WTC11 (cell line): ENCODE measurements at regions of chr7 and their contacts with region 1.

Region 1: DNA sequence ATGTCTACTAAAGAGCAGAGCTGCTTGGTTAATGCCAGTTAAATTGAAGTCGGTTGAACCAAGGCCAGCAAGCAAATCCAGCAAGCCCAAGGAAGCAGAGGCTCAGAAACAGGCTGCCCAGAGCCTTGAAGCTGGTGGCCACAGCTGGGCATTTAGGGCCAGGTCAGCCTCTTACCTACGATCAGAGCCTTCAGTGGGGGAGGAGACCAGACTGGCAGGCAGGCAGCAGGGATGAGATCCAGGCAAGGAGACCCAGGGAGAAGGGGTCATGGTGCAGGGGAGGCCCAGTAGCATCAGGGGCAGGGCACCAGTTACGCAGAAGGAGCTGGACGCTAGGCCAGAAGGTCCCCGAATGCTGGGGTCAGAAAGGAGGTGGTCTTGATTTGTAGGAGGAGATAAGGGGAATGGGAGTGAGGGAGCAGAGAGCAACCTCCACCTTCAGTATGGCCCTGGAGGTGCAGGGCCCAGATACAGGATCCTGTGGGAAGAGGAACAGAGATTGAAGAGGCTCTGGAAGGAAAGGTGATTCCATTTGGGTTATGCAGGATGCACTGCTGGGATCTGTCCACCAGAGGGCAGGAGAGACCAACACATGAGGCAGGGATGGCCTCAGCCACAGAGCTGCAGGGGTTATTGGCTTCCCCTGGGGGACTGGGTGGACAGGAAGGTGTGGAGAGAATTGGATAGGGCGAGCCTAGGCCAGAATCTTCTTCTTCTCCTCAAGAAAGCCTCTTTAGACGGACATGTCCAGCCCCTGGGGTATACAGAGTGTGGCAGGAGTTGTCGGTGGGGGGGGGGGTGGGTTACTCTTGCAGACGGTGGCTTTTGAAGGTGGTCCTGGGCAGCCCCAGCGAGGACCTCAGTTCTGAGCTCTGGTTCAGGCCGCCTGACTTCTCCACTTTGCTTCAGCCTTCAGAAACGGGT is 132.6 kb upstream of the PODXL start:
- DNase-seq: peak; percentile 91
- ATAC-seq: peak; percentile 80
- H3K4me3 Mint-ChIP-seq: no peak overlapping the region
- H3K27ac Mint-ChIP-seq: no peak overlapping the region
- H3K4me1 Mint-ChIP-seq: peaks cover 13% of the 10 kb centered on the region
- H3K27me3 Mint-ChIP-seq: peaks cover 6% of the 10 kb centered on the region
- CTCF ChIP-seq: peak; percentile 98

Region 2: GRCh38 chr7:131723926-131724325 is 34.9 kb after region 1 on chr7:
- CTCF ChIA-PET with region 1: interaction called, 12 read pairs
- POLR2A ChIA-PET with region 1: no interaction called
- DNase-seq: no peak
- ATAC-seq: no peak
- H3K4me3 Mint-ChIP-seq: no peak overlapping the region
- H3K27ac Mint-ChIP-seq: no peak overlapping the region
- H3K4me1 Mint-ChIP-seq: no peaks in the 10 kb centered on the region
- H3K27me3 Mint-ChIP-seq: peaks cover 8% of the 10 kb centered on the region; the same call in 1 of the 2 replicates
- CTCF ChIP-seq: no peak

Region 3: DNA sequence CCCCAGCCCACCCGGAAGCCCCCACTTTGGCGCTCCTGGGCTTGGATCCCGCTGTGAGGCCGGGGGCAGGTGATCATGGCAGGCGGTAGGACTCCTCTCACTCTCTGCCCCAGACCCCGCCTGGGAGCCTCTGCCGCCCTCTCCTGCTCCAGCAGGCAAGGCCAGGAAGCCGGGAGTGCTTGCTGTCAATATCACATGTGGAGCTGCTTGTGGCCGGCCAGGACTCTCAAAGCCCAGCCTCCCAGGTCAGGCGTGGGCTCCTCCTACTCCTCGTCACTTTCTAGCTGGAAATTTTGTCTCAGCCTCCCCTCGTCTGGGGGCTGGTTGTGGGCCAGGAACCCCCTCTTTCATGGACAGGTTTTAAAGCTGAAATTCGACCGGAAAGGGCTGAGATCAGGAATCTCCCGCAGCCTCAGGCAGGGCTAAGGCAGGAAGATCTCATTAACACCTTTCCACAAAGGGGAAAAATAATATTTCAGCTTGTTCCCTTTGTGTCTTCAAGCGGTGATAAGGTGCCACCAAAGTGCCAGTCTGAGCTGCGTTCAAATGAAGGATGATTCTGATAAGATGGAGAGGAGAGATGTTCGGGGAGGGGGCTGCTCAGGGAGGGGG is 141.1 kb after region 1 on chr7:
- CTCF ChIA-PET with region 1: interaction called, 18 read pairs
- POLR2A ChIA-PET with region 1: no interaction called
- DNase-seq: peak; percentile 76
- ATAC-seq: peak; percentile 98
- H3K4me3 Mint-ChIP-seq: peak overlapping the region; percentile 33
- H3K27ac Mint-ChIP-seq: no peak overlapping the region
- H3K4me1 Mint-ChIP-seq: peaks cover 21% of the 10 kb centered on the region
- H3K27me3 Mint-ChIP-seq: peaks cover 19% of the 10 kb centered on the region
- CTCF ChIP-seq: no peak

Region 4: GRCh38 chr7:131843898-131844331 is 154.9 kb after region 1 on chr7:
- CTCF ChIA-PET with region 1: interaction called, 13 read pairs
- POLR2A ChIA-PET with region 1: no interaction called
- DNase-seq: no peak
- ATAC-seq: no peak
- H3K4me3 Mint-ChIP-seq: no peak overlapping the region
- H3K27ac Mint-ChIP-seq: no peak overlapping the region
- H3K4me1 Mint-ChIP-seq: peaks cover 5% of the 10 kb centered on the region; the same call in 1 of the 2 replicates
- H3K27me3 Mint-ChIP-seq: peaks cover 3% of the 10 kb centered on the region; the same call in 1 of the 2 replicates
- CTCF ChIP-seq: no peak

Region 5: DNA sequence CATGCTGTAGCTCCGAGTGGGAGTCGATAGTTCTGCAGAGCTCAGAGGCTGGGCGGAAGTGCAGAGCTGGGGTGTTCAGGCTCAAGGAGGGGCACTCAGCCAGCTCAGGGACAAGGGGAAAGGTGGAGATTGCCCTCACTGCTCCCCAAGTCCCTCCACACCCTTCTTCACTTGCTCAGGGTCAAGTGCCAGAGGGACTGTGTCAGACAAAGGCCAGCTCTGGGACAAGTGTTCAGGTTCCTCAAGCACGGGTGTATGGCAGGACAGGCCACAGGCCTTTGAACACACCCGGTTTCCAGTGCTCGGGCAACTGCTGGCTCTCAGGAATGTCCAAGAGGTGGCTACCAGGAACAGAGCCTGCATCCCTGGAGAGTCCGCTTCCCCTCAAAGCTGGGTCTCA is 160.5 kb after region 1 on chr7:
- CTCF ChIA-PET with region 1: interaction called, 13 read pairs
- POLR2A ChIA-PET with region 1: no interaction called
- DNase-seq: no peak
- ATAC-seq: no peak
- H3K4me3 Mint-ChIP-seq: no peak overlapping the region
- H3K27ac Mint-ChIP-seq: no peak overlapping the region
- H3K4me1 Mint-ChIP-seq: no peaks in the 10 kb centered on the region
- H3K27me3 Mint-ChIP-seq: peaks cover 2% of the 10 kb centered on the region; the same call in 1 of the 2 replicates
- CTCF ChIP-seq: no peak

Region 6: GRCh38 chr7:131945313-131945911 is 256.4 kb after region 1 on chr7:
- CTCF ChIA-PET with region 1: interaction called, 32 read pairs
- POLR2A ChIA-PET with region 1: interaction called, 3 read pairs
- DNase-seq: peak; percentile 86
- ATAC-seq: peak; percentile 93
- H3K4me3 Mint-ChIP-seq: no peak overlapping the region; the same call in 1 of the 2 replicates
- H3K27ac Mint-ChIP-seq: no peak overlapping the region
- H3K4me1 Mint-ChIP-seq: peaks cover 6% of the 10 kb centered on the region; the same call in 1 of the 2 replicates
- H3K27me3 Mint-ChIP-seq: peaks cover 32% of the 10 kb centered on the region
- CTCF ChIP-seq: peak; percentile 76

Region 7: DNA sequence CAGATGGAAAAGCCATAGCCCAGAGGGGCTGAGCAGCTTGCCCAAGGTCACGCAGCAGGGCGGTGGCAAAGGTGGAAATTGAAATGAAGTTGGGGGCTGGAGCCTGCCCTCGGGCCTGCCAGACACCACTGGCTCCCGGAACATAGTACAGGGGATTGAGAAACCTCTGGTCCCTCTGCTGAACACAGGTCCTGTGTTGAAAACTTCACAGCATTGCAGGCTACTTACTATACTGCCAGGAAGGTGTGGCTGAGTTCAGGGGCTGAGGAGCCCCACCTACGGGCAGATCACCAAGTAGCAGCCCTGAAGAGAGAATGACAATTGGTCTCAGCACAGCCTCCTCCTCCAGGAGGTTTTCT is 560.6 kb after region 1 on chr7:
- CTCF ChIA-PET with region 1: interaction called, 14 read pairs
- POLR2A ChIA-PET with region 1: no interaction called
- DNase-seq: peak; percentile 51
- ATAC-seq: peak; percentile 93
- H3K4me3 Mint-ChIP-seq: no peak overlapping the region
- H3K27ac Mint-ChIP-seq: no peak overlapping the region
- H3K4me1 Mint-ChIP-seq: peaks cover 34% of the 10 kb centered on the region
- H3K27me3 Mint-ChIP-seq: peaks cover 2% of the 10 kb centered on the region; the same call in 1 of the 2 replicates
- CTCF ChIP-seq: no peak